Activated naive CD4-positive, alpha-beta T cell treated with anti-CD3 and anti-CD28 coated beads for 36 hours (primary cell): ENCODE measurements at regions of chr16 and their contacts with region 1.

Region 1: DNA sequence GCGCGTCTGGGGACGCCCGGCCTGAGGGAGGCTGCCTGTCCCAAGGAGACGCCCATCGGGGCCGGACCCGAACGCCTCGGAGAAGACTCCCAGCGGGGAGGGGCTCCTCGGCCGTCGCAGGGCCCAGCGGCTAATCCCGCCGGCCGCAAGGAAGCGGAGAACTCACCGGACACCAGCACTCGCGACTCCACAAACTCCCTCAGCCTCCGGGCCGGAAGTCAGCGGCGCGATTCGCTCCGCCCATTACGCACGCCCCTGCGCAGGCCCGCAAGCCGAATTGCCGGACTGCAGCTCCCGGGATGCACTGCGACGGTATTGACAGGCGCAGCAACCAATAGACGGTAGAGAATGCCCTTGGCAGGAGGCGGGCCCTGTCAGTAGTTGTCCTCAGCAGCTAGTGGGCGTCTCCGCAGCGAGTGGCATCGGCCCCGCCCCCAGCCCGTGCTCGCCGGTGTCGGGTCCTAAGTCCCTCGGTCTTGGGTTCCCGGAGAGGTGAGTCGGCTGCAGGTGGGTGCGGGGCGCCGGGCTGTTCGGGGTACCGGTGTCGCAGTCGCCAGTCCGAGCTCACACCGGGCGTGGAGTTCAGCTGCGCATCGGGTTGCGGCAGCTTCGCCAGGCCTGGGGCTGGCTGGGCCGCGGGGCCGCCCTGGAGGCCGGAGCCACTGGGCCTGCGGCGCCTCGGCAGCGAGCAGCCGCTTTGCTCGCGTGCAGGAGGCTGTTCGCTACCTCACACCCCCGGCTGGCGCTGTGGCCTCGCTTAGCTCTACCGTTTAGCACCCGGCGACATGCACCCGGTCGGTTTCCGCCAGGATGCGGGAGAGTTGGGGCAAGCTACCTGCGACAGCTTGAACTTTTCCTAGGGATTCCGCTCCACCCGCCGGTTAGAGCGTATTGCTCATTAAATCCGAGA is at the starts of genes ZNF174 and ZSCAN32:
- DNase-seq: peak; percentile 99
- H3K4me3 Mint-ChIP-seq: peak within 1 kb of the TSS; percentile 86
- H3K27ac Mint-ChIP-seq: peak within 1 kb of the TSS; percentile 75
- H3K4me1 Mint-ChIP-seq: peaks cover 39% of the 10 kb centered on the region
- H3K27me3 Mint-ChIP-seq: no peaks in the 10 kb centered on the region
- total RNA-seq, gene ZNF174: 5.8 to 6.3 TPM
- total RNA-seq, gene ZSCAN32: 6.5 to 7.9 TPM

Region 2: GRCh38 chr16:3134564-3135417 is 266.2 kb before region 1 on chr16 and contains the start of gene ZNF213:
- CTCF ChIA-PET with region 1: no interaction called
- intact Hi-C with region 1: loop called (anchors 1 kb)
- DNase-seq: peak; percentile 97
- H3K4me3 Mint-ChIP-seq: peak within 1 kb of the TSS; percentile 99
- H3K27ac Mint-ChIP-seq: peak within 1 kb of the TSS; percentile 91
- H3K4me1 Mint-ChIP-seq: peaks cover 29% of the 10 kb centered on the region
- H3K27me3 Mint-ChIP-seq: no peaks in the 10 kb centered on the region
- total RNA-seq, gene ZNF213: 6.1 to 6.5 TPM

Region 3: GRCh38 chr16:3188925-3189825 is 211.9 kb before region 1 on chr16:
- CTCF ChIA-PET with region 1: no interaction called
- intact Hi-C with region 1: loop called (anchors 5 kb)
- DNase-seq: peak; percentile 76
- H3K4me3 Mint-ChIP-seq: peak overlapping the region; percentile 79
- H3K27ac Mint-ChIP-seq: peak overlapping the region; percentile 84
- H3K4me1 Mint-ChIP-seq: peaks cover 46% of the 10 kb centered on the region
- H3K27me3 Mint-ChIP-seq: peaks cover 73% of the 10 kb centered on the region

Region 4: DNA sequence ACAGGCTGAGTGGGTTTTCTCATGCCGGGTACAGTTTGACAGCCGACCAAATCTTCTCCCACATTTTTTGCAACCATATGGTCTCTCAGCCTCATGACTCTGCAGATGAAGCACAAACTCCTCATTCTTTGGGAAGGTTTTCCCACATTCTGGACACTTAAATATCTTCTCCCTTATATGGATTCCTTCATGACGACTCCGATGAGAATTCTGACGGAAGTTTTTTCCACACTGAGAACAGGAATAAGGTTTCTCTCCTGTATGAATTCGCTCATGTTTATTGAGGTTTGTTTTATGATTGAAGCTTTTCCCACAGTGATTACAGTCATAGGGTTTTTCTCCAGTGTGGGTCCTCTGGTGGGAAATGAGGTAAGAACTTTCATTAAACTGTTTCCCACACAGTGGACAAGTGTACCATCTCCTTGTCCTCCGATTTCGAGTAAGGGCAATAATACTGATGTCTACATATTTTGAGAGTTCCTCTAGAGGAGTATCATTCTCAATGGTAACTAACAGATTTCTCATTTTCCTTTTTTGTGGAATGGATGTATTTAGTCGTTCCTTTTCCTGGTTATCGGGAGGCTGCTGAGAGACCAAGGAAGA is 177.0 kb before region 1 on chr16:
- CTCF ChIA-PET with region 1: no interaction called
- intact Hi-C with region 1: no loop called
- DNase-seq: no peak
- H3K4me3 Mint-ChIP-seq: no peak overlapping the region
- H3K27ac Mint-ChIP-seq: no peak overlapping the region
- H3K4me1 Mint-ChIP-seq: no peaks in the 10 kb centered on the region
- H3K27me3 Mint-ChIP-seq: no peaks in the 10 kb centered on the region

Region 5: DNA sequence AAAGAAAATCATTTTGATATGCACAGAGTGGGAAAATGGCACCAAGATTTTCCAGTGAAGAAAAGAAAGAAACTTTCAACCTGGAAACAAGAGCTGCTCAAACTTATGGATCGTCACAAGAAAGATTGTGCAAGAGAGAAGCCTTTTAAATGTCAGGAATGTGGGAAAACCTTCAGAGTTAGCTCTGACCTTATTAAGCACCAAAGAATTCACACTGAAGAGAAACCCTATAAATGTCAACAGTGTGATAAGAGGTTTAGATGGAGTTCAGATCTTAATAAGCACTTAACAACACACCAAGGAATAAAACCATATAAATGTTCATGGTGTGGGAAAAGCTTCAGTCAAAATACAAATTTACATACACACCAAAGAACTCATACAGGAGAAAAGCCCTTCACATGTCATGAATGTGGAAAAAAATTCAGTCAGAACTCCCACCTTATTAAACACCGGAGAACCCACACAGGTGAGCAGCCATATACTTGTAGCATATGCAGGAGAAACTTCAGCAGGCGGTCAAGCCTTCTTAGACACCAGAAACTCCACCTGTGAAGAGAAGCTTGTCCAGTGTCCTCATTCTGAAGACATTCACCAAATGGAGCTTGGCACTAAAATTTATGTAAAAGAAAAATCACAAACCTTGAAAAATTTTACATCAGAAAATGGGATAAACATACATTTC is 83.6 kb before region 1 on chr16:
- CTCF ChIA-PET with region 1: no interaction called
- intact Hi-C with region 1: no loop called
- DNase-seq: no peak
- H3K4me3 Mint-ChIP-seq: no peak overlapping the region
- H3K27ac Mint-ChIP-seq: no peak overlapping the region
- H3K4me1 Mint-ChIP-seq: no peaks in the 10 kb centered on the region
- H3K27me3 Mint-ChIP-seq: no peaks in the 10 kb centered on the region

Region 6: GRCh38 chr16:3364774-3365427 is 36.1 kb before region 1 on chr16:
- CTCF ChIA-PET with region 1: interaction called, 3 read pairs
- intact Hi-C with region 1: loop called (anchors 1 kb)
- DNase-seq: peak; percentile 91
- H3K4me3 Mint-ChIP-seq: peak overlapping the region; percentile 78
- H3K27ac Mint-ChIP-seq: peak overlapping the region; percentile 79
- H3K4me1 Mint-ChIP-seq: peaks cover 10% of the 10 kb centered on the region
- H3K27me3 Mint-ChIP-seq: peaks cover 3% of the 10 kb centered on the region

Region 7: DNA sequence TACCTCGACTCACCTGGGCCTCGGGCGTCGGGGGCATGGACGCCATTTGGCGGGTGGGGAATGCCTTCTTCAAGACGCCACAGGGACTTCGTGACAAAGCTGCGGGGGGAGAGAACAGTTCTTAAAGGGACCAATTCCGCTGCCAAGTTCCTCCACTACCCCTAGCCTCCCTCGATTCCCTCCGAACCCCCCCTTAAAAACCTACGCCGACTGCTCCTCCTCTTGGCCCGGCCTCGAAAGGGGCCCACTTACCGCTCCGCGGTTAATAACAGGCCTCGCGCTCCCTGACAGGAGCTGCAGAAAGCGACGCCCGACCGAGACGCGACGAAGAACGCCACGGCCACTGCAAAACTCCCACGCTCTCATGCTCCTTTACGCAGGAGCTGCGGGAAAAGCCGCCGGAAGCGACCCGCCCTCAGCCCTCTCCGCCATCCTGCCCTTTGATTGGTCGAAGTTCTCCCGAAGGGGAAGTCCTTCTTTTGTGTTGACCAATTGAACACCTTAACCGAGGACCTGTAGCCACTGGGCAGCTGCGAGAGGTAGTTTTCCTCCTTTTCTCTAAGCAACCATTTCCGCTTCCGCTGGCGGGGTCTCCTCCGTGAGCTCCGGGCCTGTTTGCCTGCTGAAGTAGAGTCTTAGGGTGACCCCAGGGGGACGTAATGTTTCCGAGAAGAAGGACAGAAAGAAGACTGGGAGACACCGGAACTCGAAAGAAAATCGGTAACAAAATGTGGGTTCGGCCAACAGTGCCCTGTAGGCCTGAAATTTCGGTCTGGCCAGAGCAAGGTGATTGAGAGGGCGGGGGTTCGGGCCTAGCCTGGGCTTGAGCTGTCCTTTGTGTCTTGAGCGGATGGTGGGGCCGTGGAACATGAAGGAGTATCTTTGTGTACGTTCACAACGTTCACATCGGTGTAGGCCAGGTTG is 42.3 kb after region 1 on chr16 and contains the starts of genes NAA60 and ZNF597:
- CTCF ChIA-PET with region 1: no interaction called
- intact Hi-C with region 1: loop called (anchors 1 kb)
- DNase-seq: peak; percentile 87
- H3K4me3 Mint-ChIP-seq: peak within 1 kb of the TSS; percentile 95
- H3K27ac Mint-ChIP-seq: peak within 1 kb of the TSS; percentile 93
- H3K4me1 Mint-ChIP-seq: peaks cover 23% of the 10 kb centered on the region
- H3K27me3 Mint-ChIP-seq: no peaks in the 10 kb centered on the region
- total RNA-seq, gene NAA60: 20.0 to 27.1 TPM
- total RNA-seq, gene ZNF597: 1.1 TPM